CD8-positive, alpha-beta T cell (primary cell): ENCODE measurements at regions of chr20 and their contacts with region 1.

Region 1: GRCh38 chr20:35954200-35954906 is at the start of gene SCAND1:
- DNase-seq: peak; percentile 93 to 99 (median 96)
- ATAC-seq: peak; percentile 84
- H3K4me3 ChIP-seq: peak within 1 kb of the TSS; percentile 77 to 95
- H3K4me3 Mint-ChIP-seq: peak within 1 kb of the TSS; percentile 99
- H3K27ac ChIP-seq: peak within 1 kb of the TSS; percentile 99
- H3K27ac Mint-ChIP-seq: peak within 1 kb of the TSS; percentile 99
- H3K4me1 ChIP-seq: peaks cover 23% of the 10 kb centered on the region
- H3K4me1 Mint-ChIP-seq: peaks cover 25% of the 10 kb centered on the region
- H3K27me3 ChIP-seq: no peaks in the 10 kb centered on the region
- H3K27me3 Mint-ChIP-seq: no peaks in the 10 kb centered on the region
- CTCF ChIP-seq: peak; percentile 97
- total RNA-seq, gene SCAND1: 94.8 to 100 TPM

Region 2: DNA sequence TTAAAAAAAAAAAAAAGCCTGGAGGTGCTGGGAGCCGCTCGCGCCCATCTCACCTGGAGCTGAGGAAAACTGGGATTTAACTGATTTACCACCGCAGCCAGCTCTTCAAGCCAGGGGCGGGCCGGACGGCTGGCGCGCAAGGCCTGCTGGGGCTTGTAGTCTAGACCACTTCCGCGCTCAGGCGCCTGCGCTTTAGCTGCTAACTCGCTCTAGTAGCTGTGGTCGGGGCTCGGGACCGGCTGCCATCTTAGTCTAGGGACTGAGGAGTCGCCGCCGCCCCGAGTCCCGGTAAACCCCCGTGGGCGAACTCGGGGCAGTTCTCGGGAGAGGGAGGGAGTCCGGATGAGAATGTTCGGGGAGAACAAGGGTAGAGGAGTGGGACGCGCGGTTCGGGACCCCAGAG is 1591.3 kb before region 1 on chr20 and contains the start of gene ITCH:
- CTCF ChIA-PET with region 1: no interaction called
- POLR2A ChIA-PET with region 1: no interaction called
- intact Hi-C with region 1: loop called in 1 of 2 experiments (anchors 10 kb)
- DNase-seq: peak; percentile 80 to 96 (median 93)
- ATAC-seq: peak; percentile 99
- H3K4me3 ChIP-seq: peak within 1 kb of the TSS; percentile 92 to 93
- H3K4me3 Mint-ChIP-seq: peak within 1 kb of the TSS; percentile 99
- H3K27ac ChIP-seq: peak within 1 kb of the TSS; percentile 86 to 91
- H3K27ac Mint-ChIP-seq: peak within 1 kb of the TSS; percentile 99
- H3K4me1 ChIP-seq: peaks cover 40% of the 10 kb centered on the region
- H3K4me1 Mint-ChIP-seq: peaks cover 45% of the 10 kb centered on the region
- H3K27me3 ChIP-seq: no peaks in the 10 kb centered on the region
- H3K27me3 Mint-ChIP-seq: no peaks in the 10 kb centered on the region
- CTCF ChIP-seq: no peak
- total RNA-seq, gene ITCH: 50.4 to 55.2 TPM

Region 3: DNA sequence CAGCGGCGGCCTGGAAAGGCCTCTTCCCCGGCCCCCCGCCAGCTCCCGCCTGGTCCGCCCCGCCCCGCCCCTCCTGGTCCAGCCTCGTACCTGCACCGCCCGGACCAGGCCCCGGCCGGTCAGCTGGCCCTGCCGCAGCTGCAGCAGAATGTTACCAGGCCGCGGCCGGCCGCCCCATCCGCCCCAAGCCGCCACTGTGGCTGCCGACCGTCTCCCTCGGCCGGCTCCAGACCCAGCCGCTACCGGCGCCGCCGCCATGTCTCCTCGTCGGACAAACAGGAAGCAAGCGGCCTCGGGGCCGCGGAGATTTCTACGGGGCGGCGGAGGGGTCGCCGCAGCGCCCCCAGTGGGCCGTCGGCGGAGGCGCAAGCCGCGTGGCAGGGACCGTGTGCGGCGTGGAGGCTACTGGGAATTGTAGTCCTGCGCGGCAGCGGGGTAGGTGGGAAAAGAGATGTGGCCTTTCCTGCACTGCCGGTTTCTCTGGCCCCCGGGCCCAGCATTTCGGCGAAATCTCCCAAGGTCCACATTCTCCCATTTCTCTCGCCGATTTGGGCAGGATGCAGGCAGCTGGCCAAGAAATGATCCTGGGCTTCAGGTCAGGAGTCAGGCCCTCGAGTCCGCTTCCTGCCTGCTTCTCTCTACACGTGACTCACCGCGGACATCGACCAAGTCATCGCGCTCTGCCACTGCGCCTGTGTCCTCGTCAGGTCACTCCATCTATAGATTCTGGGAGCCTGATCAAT is 861.7 kb before region 1 on chr20 and contains the start of gene TRPC4AP:
- CTCF ChIA-PET with region 1: no interaction called
- POLR2A ChIA-PET with region 1: interaction called, 3 read pairs
- intact Hi-C with region 1: loop called in 1 of 2 experiments (anchors 10 kb)
- DNase-seq: peak; percentile 77 to 95 (median 87)
- ATAC-seq: peak; percentile 97
- H3K4me3 ChIP-seq: peak within 1 kb of the TSS; percentile 84 to 91
- H3K4me3 Mint-ChIP-seq: peak within 1 kb of the TSS; percentile 89
- H3K27ac ChIP-seq: peak within 1 kb of the TSS; percentile 72 to 74
- H3K27ac Mint-ChIP-seq: peak within 1 kb of the TSS; percentile 91
- H3K4me1 ChIP-seq: peaks cover 42% of the 10 kb centered on the region
- H3K4me1 Mint-ChIP-seq: peaks cover 49% of the 10 kb centered on the region
- H3K27me3 ChIP-seq: no peaks in the 10 kb centered on the region
- H3K27me3 Mint-ChIP-seq: no peaks in the 10 kb centered on the region
- CTCF ChIP-seq: peak; percentile 88
- total RNA-seq, gene TRPC4AP: 63.3 to 64.0 TPM

Region 4: DNA sequence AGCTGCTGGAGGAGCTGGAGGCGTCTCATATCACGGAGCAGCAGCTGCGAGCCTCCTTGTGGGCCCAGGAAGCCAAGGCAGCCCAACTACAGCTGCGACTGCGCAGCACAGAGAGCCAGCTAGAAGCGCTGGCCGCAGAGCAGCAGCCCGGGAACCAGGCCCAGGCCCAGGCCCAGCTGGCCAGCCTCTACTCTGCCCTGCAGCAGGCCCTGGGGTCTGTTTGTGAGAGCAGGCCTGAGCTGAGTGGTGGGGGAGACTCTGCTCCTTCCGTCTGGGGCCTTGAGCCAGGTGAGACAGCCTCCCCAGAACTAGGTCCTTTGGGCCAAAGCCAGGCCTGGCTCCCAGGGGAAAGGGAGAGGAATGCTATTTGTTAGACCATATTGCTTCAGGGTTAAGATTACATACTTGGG is 456.6 kb before region 1 on chr20:
- CTCF ChIA-PET with region 1: no interaction called
- POLR2A ChIA-PET with region 1: no interaction called
- intact Hi-C with region 1: no loop called
- DNase-seq: no peak
- ATAC-seq: no peak
- H3K4me3 ChIP-seq: no peak overlapping the region
- H3K4me3 Mint-ChIP-seq: no peak overlapping the region
- H3K27ac ChIP-seq: no peak overlapping the region
- H3K27ac Mint-ChIP-seq: no peak overlapping the region
- H3K4me1 ChIP-seq: peaks cover 13% of the 10 kb centered on the region
- H3K4me1 Mint-ChIP-seq: peaks cover 24% of the 10 kb centered on the region
- H3K27me3 ChIP-seq: no peaks in the 10 kb centered on the region
- H3K27me3 Mint-ChIP-seq: no peaks in the 10 kb centered on the region
- CTCF ChIP-seq: no peak

Region 5: GRCh38 chr20:35619196-35620095 is 334.9 kb before region 1 on chr20:
- CTCF ChIA-PET with region 1: no interaction called
- POLR2A ChIA-PET with region 1: interaction called, 8 read pairs
- intact Hi-C with region 1: loop called in 1 of 2 experiments (anchors 1 kb)
- DNase-seq: peak; percentile 57 to 91 (median 76)
- ATAC-seq: peak; percentile 8
- H3K4me3 ChIP-seq: peak overlapping the region; percentile 64 to 69
- H3K4me3 Mint-ChIP-seq: peak overlapping the region; percentile 90
- H3K27ac ChIP-seq: peak overlapping the region in 1 of 2 experiments; percentile 25
- H3K27ac Mint-ChIP-seq: peak overlapping the region; percentile 75
- H3K4me1 ChIP-seq: peaks cover 27% of the 10 kb centered on the region
- H3K4me1 Mint-ChIP-seq: peaks cover 35% of the 10 kb centered on the region
- H3K27me3 ChIP-seq: peaks cover 0 to 4% of the 10 kb centered on the region in 2 experiments
- H3K27me3 Mint-ChIP-seq: no peaks in the 10 kb centered on the region
- CTCF ChIP-seq: peak; percentile 52

Region 6: DNA sequence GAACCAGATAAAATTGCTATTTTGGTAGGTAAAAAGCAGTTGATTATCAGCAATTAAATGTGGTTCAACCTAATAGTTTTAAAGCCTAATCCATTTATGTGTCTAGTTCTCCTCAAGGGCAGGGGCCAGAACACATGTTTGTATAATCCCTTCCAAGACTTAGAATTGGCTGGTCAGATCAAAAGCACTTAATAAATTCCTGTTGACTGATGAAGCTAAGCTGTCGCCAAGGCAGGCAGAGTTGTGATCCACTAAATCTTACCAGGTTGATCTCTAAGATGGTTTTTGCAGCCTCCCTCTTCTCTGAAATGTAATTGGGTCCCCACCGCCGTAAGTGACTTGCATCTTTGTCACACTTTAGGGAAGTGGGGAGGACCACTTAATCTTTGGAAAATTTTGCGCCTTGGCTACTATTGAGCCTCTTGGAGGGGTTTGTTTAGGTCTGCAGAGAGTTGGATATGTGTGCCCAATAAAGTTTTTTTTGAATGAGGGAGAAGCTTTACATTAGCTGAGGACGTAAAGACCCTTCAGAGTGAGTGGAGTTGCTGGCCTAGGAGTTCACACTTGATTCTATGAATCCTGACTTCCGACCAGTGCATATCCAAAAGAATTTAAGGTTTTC is 116.7 kb before region 1 on chr20:
- CTCF ChIA-PET with region 1: no interaction called
- POLR2A ChIA-PET with region 1: no interaction called
- intact Hi-C with region 1: no loop called
- DNase-seq: no peak
- ATAC-seq: no peak
- H3K4me3 ChIP-seq: no peak overlapping the region
- H3K4me3 Mint-ChIP-seq: no peak overlapping the region
- H3K27ac ChIP-seq: peak overlapping the region in 1 of 2 experiments; percentile 19
- H3K27ac Mint-ChIP-seq: peak overlapping the region; percentile 10
- H3K4me1 ChIP-seq: peaks cover 22% of the 10 kb centered on the region
- H3K4me1 Mint-ChIP-seq: peaks cover 51% of the 10 kb centered on the region
- H3K27me3 ChIP-seq: no peaks in the 10 kb centered on the region
- H3K27me3 Mint-ChIP-seq: no peaks in the 10 kb centered on the region
- CTCF ChIP-seq: no peak

Region 7: DNA sequence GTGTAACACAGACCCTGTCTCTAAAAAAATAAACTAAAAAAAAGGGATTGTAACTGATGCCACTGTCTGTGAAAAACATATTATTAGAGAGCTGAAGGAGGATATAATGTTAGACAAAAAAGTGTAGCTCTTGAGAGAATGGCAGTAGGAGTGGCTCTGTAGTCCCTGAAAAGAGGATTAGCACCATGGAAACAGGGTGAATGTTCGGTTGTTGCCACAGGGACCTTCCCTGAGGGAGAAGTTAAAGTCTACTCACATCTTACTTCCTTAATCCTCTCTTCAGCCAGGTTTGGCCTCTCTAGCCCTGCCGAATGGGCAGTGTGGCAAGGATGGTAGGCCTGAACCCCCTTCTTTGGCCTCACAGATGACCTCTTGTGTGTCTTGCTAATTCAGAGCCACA is 12.1 kb before region 1 on chr20:
- CTCF ChIA-PET with region 1: interaction called, 9 read pairs
- POLR2A ChIA-PET with region 1: interaction called, 22 read pairs
- intact Hi-C with region 1: no loop called
- DNase-seq: no peak
- ATAC-seq: no peak
- H3K4me3 ChIP-seq: no peak overlapping the region
- H3K4me3 Mint-ChIP-seq: no peak overlapping the region
- H3K27ac ChIP-seq: no peak overlapping the region
- H3K27ac Mint-ChIP-seq: peak overlapping the region; percentile 13
- H3K4me1 ChIP-seq: no peaks in the 10 kb centered on the region
- H3K4me1 Mint-ChIP-seq: peaks cover under 1% of the 10 kb centered on the region
- H3K27me3 ChIP-seq: no peaks in the 10 kb centered on the region
- H3K27me3 Mint-ChIP-seq: no peaks in the 10 kb centered on the region
- CTCF ChIP-seq: no peak

Region 8: GRCh38 chr20:36573103-36573794 is 618.9 kb after region 1 on chr20 and contains the start of gene TGIF2:
- CTCF ChIA-PET with region 1: no interaction called
- POLR2A ChIA-PET with region 1: interaction called, 6 read pairs
- intact Hi-C with region 1: loop called in 1 of 2 experiments (anchors 10 kb)
- DNase-seq: peak; percentile 84 to 96 (median 90)
- ATAC-seq: peak; percentile 79
- H3K4me3 ChIP-seq: peak within 1 kb of the TSS; percentile 96 to 99
- H3K4me3 Mint-ChIP-seq: peak within 1 kb of the TSS; percentile 95
- H3K27ac ChIP-seq: peak within 1 kb of the TSS; percentile 92 to 100
- H3K27ac Mint-ChIP-seq: peak within 1 kb of the TSS; percentile 99
- H3K4me1 ChIP-seq: peaks cover 41% of the 10 kb centered on the region
- H3K4me1 Mint-ChIP-seq: peaks cover 43% of the 10 kb centered on the region
- H3K27me3 ChIP-seq: no peaks in the 10 kb centered on the region
- H3K27me3 Mint-ChIP-seq: no peaks in the 10 kb centered on the region
- CTCF ChIP-seq: no peak
- total RNA-seq, gene TGIF2: 50.4 to 51.1 TPM